ENCODE measurements at regions of chr4 and their contacts with region 1.

Region 1: DNA sequence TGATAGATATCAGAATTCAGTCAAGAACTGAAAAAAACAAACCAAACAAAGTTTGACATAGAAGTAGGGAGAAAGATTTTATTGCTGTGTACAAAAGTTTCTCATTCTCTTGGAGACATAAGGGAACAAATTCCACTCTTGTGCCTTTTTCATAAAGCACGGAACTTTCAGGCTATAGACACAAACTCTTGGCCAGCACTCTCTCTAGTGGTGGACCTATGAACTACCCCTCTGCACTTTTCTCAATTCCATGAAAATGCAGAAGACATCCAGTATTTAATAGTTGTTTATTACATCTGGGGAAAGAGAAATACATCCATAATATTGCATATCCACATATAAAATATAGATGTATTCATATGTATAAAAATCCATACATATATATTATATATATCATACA is 291.6 kb upstream of the HS3ST1 start:
- DNase-seq: peak in 1 of 5 donors; percentile 3
- H3K4me3 ChIP-seq: no peak overlapping the region
- H3K4me3 Mint-ChIP-seq: peak overlapping the region in 1 of 8 donors; percentile 28
- H3K27ac ChIP-seq: no peak overlapping the region
- H3K27ac Mint-ChIP-seq: no peak overlapping the region
- H3K4me1 ChIP-seq: no peaks in the 10 kb centered on the region
- H3K4me1 Mint-ChIP-seq: no peaks in the 10 kb centered on the region
- H3K27me3 ChIP-seq: no peaks in the 10 kb centered on the region
- H3K27me3 Mint-ChIP-seq: peaks cover 6 to 13% of the 10 kb centered on the region in 2 donors

Region 2: GRCh38 chr4:10582059-10582686 is 1138.1 kb before region 1 on chr4:
- CTCF ChIA-PET with region 1: interaction called, 4 read pairs
- POLR2A ChIA-PET with region 1: no interaction called
- intact Hi-C with region 1: loop called (anchors 10 kb)
- DNase-seq: peak in 3 of 5 donors; percentile 4 to 11 (median 6)
- H3K4me3 ChIP-seq: no peak overlapping the region
- H3K4me3 Mint-ChIP-seq: no peak overlapping the region
- H3K27ac ChIP-seq: no peak overlapping the region
- H3K27ac Mint-ChIP-seq: no peak overlapping the region
- H3K4me1 ChIP-seq: peaks cover 6% of the 10 kb centered on the region
- H3K4me1 Mint-ChIP-seq: peaks cover 6 to 13% (median 9%) of the 10 kb centered on the region in 4 donors
- H3K27me3 ChIP-seq: no peaks in the 10 kb centered on the region
- H3K27me3 Mint-ChIP-seq: peaks cover 0 to 10% of the 10 kb centered on the region in 2 donors

Region 3: DNA sequence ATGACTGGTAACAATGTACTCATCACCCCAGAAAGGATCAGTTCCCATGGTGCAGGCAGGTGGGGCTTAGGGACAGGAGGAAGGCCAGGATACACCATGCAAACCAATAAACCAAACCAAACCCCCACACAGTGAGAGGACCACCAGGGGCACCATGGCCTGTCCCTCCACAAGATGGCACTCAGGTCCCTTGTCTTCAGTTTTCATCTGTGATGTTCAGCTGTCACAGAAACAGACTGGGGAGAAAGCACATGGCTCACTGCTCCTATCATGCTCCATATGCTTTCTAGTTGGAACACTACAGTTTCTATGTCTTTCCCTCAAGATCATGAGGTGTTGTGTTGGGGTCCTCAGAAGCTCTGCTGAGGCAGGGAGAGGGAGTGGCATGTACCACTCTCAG is 301.7 kb before region 1 on chr4:
- CTCF ChIA-PET with region 1: no interaction called
- POLR2A ChIA-PET with region 1: no interaction called
- intact Hi-C with region 1: loop called (anchors 2 kb)
- DNase-seq: no peak
- H3K4me3 ChIP-seq: no peak overlapping the region
- H3K4me3 Mint-ChIP-seq: no peak overlapping the region
- H3K27ac ChIP-seq: no peak overlapping the region
- H3K27ac Mint-ChIP-seq: no peak overlapping the region
- H3K4me1 ChIP-seq: no peaks in the 10 kb centered on the region
- H3K4me1 Mint-ChIP-seq: no peaks in the 10 kb centered on the region
- H3K27me3 ChIP-seq: no peaks in the 10 kb centered on the region
- H3K27me3 Mint-ChIP-seq: peaks cover 2 to 5% of the 10 kb centered on the region in 2 donors

Region 4: DNA sequence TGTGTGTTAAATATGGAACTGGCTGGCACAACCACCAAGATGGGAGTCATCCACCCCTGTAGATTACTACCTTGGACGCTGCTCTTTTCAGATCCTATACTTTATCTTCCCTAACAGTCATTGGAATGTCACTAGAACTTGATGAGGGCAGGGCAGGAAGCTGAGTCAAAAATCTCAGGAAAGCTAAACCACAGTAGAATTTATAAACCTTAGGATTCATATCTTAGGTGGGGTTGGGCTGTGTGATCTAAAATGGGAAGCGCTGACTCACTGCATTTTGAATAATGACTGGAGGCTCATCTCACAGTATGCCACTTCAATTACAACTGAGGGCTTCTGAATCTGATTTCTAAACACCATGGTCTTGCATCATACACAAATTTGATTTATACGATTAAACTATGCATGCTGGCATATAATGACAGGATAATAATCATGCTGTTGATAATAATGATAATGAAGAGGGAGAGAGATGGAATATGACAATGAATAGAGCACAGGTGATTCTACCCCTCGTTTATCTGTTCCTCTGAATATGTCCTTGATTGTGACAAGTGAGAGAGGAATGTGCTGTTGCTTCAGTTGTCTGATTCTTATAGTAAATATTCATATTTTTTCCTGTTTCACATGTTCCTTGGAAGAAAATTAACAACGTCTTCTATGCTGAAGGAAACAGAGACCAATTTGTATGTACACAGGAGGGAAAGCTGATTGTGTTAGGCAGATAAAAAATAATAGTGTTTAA is 21.3 kb before region 1 on chr4:
- CTCF ChIA-PET with region 1: no interaction called
- POLR2A ChIA-PET with region 1: no interaction called
- intact Hi-C with region 1: no loop called
- DNase-seq: no peak
- H3K4me3 ChIP-seq: no peak overlapping the region
- H3K4me3 Mint-ChIP-seq: no peak overlapping the region
- H3K27ac ChIP-seq: no peak overlapping the region
- H3K27ac Mint-ChIP-seq: no peak overlapping the region
- H3K4me1 ChIP-seq: no peaks in the 10 kb centered on the region
- H3K4me1 Mint-ChIP-seq: no peaks in the 10 kb centered on the region
- H3K27me3 ChIP-seq: no peaks in the 10 kb centered on the region
- H3K27me3 Mint-ChIP-seq: no peaks in the 10 kb centered on the region

Region 5: GRCh38 chr4:11799196-11799595 is 78.9 kb after region 1 on chr4:
- CTCF ChIA-PET with region 1: no interaction called
- POLR2A ChIA-PET with region 1: no interaction called
- intact Hi-C with region 1: no loop called
- DNase-seq: no peak
- H3K4me3 ChIP-seq: no peak overlapping the region
- H3K4me3 Mint-ChIP-seq: no peak overlapping the region
- H3K27ac ChIP-seq: no peak overlapping the region
- H3K27ac Mint-ChIP-seq: no peak overlapping the region
- H3K4me1 ChIP-seq: no peaks in the 10 kb centered on the region
- H3K4me1 Mint-ChIP-seq: no peaks in the 10 kb centered on the region
- H3K27me3 ChIP-seq: no peaks in the 10 kb centered on the region
- H3K27me3 Mint-ChIP-seq: no peaks in the 10 kb centered on the region

Region 6: GRCh38 chr4:11866391-11866790 is 146.1 kb after region 1 on chr4:
- CTCF ChIA-PET with region 1: no interaction called
- POLR2A ChIA-PET with region 1: no interaction called
- intact Hi-C with region 1: no loop called
- DNase-seq: no peak
- H3K4me3 ChIP-seq: no peak overlapping the region
- H3K4me3 Mint-ChIP-seq: no peak overlapping the region
- H3K27ac ChIP-seq: no peak overlapping the region
- H3K27ac Mint-ChIP-seq: peak overlapping the region in 1 of 7 donors; percentile 4
- H3K4me1 ChIP-seq: no peaks in the 10 kb centered on the region
- H3K4me1 Mint-ChIP-seq: no peaks in the 10 kb centered on the region
- H3K27me3 ChIP-seq: no peaks in the 10 kb centered on the region
- H3K27me3 Mint-ChIP-seq: no peaks in the 10 kb centered on the region

Measured in CD4-positive, alpha-beta memory T cell (primary cell).